ENCODE measurements at regions of chr6 and their contacts with region 1.

Region 1: GRCh38 chr6:131694831-131695426 is 6.3 kb downstream of the OR2A4 start:
- DNase-seq: no peak
- H3K4me3 ChIP-seq: no peak overlapping the region
- CTCF ChIP-seq: peak; percentile 91

Region 2: DNA sequence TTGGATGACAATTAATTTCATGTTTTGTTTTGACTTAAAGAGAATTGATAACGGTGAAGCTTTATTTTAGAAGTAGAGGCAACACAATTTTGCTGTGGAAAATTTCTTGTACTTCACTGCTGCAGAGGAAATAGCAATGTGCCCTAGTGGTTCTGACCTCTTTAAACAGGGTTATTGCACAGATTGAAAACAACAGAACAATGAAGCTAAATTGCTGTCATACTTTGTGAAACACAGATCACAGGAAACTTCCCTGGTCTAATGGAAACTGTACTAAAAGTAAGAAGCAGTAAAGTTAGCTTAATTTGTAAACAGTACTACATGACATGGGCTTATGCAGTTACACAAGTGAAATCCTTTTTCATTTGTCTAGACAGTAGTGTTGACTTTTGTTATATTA is 25.0 kb before region 1 on chr6:
- CTCF ChIA-PET with region 1: interaction called, 23 read pairs
- POLR2A ChIA-PET with region 1: no interaction called
- DNase-seq: no peak
- H3K4me3 ChIP-seq: no peak overlapping the region
- CTCF ChIP-seq: no peak

Region 3: DNA sequence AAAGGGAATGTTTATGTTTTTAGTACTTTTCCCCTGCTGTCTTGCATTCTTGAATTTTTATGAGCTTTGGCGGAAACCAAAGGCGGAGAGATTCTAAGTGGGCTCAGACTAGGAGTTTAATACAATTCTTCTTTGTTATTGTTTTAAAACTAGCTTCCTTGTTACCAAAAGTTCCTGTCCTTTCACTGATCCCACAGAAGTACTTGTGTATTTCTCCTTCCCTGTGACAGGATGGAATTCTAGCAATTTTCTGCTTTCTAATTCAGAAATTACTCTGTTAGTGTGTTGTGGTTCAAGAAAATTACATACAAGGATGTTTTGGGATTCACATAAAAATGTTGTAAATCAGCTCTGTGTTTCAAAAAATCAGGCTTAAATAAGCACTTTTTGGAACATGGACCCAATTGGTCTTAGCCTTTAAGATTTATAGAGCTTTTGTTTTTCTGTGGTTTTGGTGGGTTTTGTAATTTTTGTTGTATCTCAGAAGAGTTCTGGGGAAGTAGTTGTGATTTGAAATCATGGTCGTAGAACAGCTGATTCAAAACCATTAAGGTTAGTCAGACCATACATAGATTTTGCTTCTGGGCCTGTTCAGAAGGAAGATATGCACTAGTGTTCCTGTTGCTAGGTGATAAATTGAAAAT is 33.5 kb after region 1 on chr6:
- CTCF ChIA-PET with region 1: interaction called, 20 read pairs
- POLR2A ChIA-PET with region 1: no interaction called
- DNase-seq: no peak
- H3K4me3 ChIP-seq: no peak overlapping the region
- CTCF ChIP-seq: no peak

Region 4: DNA sequence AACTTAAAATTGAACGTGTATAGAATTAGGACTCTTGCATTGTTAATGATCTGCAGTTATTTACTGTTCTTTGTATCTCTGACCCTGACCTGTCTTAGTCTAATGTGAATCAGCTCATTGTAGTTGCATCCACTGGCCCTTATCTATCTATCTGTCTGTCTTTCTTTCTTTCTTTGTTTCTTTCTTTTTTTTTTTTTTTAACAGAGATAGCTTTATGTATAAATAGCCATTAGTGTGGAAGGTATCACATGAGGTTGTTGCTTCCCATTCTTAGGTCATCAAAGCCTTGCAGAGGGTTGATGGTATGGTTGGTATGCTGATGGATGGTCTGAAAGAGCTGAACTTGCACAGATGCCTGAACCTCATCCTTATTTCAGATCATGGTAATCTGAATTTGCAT is 172.8 kb after region 1 on chr6:
- CTCF ChIA-PET with region 1: interaction called, 10 read pairs
- POLR2A ChIA-PET with region 1: no interaction called
- DNase-seq: no peak
- H3K4me3 ChIP-seq: no peak overlapping the region
- CTCF ChIP-seq: no peak

Region 5: GRCh38 chr6:131909408-131910218 is 214.7 kb after region 1 on chr6:
- CTCF ChIA-PET with region 1: interaction called, 200 read pairs
- POLR2A ChIA-PET with region 1: interaction called, 5 read pairs
- DNase-seq: no peak
- H3K4me3 ChIP-seq: no peak overlapping the region
- CTCF ChIP-seq: peak; percentile 83

Measured in AG04449 (cell line).